ENCODE measurements at regions of chr14 and their contacts with region 1.

Region 1: GRCh38 chr14:91177073-91178034 is 63.5 kb downstream of the DGLUCY start:
- ATAC-seq: peak in 6 of 8 experiments; percentile 20 to 90 (median 76)
- H3K4me3 ChIP-seq: no peak overlapping the region
- H3K27ac ChIP-seq: no peak overlapping the region
- H3K4me1 ChIP-seq: peaks cover 7 to 12% of the 10 kb centered on the region in 2 donors

Region 2: GRCh38 chr14:90461425-90461824 is 715.9 kb before region 1 on chr14:
- in situ Hi-C with region 1: no loop called
- ATAC-seq: no peak
- H3K4me3 ChIP-seq: no peak overlapping the region
- H3K27ac ChIP-seq: no peak overlapping the region
- H3K4me1 ChIP-seq: peaks cover 5% of the 10 kb centered on the region in 2 donors

Region 3: GRCh38 chr14:91286530-91286937 is 109.2 kb after region 1 on chr14:
- in situ Hi-C with region 1: loop called in 1 of 9 experiments (anchors 10 kb)
- ATAC-seq: peak; percentile 65 to 85 (median 76)
- H3K4me3 ChIP-seq: no peak overlapping the region
- H3K27ac ChIP-seq: no peak overlapping the region
- H3K4me1 ChIP-seq: peaks cover 3 to 13% of the 10 kb centered on the region in 2 donors

Measured in motor neuron (in vitro differentiated cells).